Gastrocnemius medialis (tissue), 4 donors: ENCODE measurements at regions of chr5 and their contacts with region 1.

Region 1: DNA sequence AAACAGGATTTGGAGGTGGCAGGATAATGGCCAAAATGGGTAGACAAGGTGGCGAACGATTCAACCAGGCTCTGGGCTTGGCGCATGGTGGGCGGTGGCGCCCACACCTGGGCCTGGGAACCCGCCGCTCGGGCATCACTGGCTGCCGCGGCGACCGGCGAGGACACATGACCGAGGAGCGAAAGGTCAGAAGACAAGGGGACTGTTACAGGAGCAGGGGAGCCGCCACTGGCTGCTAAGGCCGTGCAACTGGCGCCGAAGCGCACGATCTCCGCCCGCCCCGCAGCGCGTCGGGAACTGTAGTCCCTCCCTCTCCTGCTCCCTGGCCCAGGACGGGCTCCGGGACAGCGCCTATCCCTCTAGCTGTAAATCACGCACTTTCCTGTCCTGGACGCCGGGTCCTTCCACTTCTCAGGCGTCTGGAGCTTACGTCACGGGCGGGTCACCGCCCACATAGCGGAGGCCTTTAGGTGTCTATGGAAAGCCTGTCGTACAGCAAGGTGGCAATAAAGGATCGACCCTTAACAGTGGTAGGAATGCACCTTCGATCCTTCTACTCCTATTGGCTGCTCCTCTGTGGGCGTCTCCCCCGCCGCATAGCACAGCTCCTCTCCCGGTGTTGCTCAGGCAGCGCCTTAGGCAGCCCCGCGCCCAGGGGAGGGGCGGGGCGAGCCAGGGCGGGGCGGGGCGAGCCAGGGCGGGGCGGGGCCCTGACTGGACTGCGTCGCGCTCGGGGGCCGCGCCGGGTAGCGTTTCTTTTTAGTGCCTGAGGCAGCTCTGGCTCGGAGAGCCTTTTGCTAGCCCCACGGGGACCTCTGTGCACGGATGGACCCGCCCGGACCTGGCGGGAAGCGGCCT is at the start of gene ICE1:
- DNase-seq: peak; percentile 97 to 99
- ATAC-seq: peak; percentile 96 to 97
- H3K4me3 ChIP-seq: peak within 1 kb of the TSS; percentile 66 to 99 (median 84)
- H3K27ac ChIP-seq: peak within 1 kb of the TSS; percentile 89 to 99 (median 94)
- H3K4me1 ChIP-seq: peaks cover 34 to 44% of the 10 kb centered on the region in 2 donors
- H3K27me3 ChIP-seq: no peaks in the 10 kb centered on the region
- CTCF ChIP-seq: peak in 1 of 5 experiments; percentile 8
- POLR2A ChIP-seq: peak; percentile 39 to 66
- total RNA-seq, gene ICE1: 24.9 to 34.7 (median 32.7) TPM

Region 2: DNA sequence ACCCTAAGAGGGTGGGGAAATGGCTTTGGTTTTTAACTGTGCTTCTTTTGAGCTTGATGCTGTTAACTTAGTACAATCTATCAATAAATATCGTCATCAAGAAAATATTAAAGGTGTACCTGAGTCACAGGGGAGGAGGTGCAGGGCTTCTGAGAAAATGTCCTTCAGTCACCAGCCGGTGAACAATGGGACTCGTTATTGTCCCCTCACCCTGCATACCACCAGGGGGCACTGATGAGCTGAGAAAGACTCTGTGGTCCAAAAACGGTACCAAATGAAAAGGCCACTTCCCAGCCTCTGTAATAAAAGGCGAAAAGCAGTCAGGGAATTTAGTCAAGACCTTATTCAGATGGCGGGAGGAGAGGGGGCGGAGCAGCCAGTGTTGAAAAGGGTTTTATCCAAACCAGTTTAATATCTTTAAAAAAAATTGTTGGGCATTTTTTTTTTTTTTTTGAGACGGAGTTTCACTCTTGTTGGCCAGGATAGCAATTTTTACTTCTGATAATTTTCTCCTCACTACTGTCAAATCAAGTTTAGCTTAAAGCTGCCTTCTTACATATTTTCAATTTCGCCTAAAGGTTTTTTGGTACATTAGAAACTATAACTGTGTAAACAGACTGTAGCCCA is 554.0 kb before region 1 on chr5:
- in situ Hi-C with region 1: loop called in 1 of 4 experiments (anchors 25 kb)
- intact Hi-C with region 1: loop called (anchors 2 kb)
- DNase-seq: no peak
- ATAC-seq: peak in 1 of 2 donors; percentile 49
- H3K4me3 ChIP-seq: no peak overlapping the region
- H3K27ac ChIP-seq: no peak overlapping the region
- H3K4me1 ChIP-seq: no peaks in the 10 kb centered on the region
- H3K27me3 ChIP-seq: no peaks in the 10 kb centered on the region
- CTCF ChIP-seq: peak in 4 of 5 experiments; percentile 30 to 73 (median 48)
- POLR2A ChIP-seq: no peak

Region 3: GRCh38 chr5:5141625-5142532 is 280.3 kb before region 1 on chr5:
- in situ Hi-C with region 1: no loop called
- intact Hi-C with region 1: loop called (anchors 1 kb)
- DNase-seq: peak in 1 of 2 donors; percentile 22
- ATAC-seq: peak; percentile 68 to 81
- H3K4me3 ChIP-seq: peak overlapping the region; percentile 42 to 48 (median 44)
- H3K27ac ChIP-seq: no peak overlapping the region
- H3K4me1 ChIP-seq: peaks cover 7 to 22% of the 10 kb centered on the region in 2 donors
- H3K27me3 ChIP-seq: peaks cover 20 to 25% (median 24%) of the 10 kb centered on the region in 3 donors
- CTCF ChIP-seq: peak; percentile 72 to 82 (median 75)
- POLR2A ChIP-seq: no peak

Region 4: GRCh38 chr5:5326115-5326758 is 96.0 kb before region 1 on chr5:
- in situ Hi-C with region 1: no loop called
- intact Hi-C with region 1: no loop called
- DNase-seq: no peak
- ATAC-seq: no peak
- H3K4me3 ChIP-seq: no peak overlapping the region
- H3K27ac ChIP-seq: no peak overlapping the region
- H3K4me1 ChIP-seq: no peaks in the 10 kb centered on the region
- H3K27me3 ChIP-seq: no peaks in the 10 kb centered on the region
- CTCF ChIP-seq: no peak
- POLR2A ChIP-seq: no peak

Region 5: GRCh38 chr5:5398046-5398445 is 24.1 kb before region 1 on chr5:
- in situ Hi-C with region 1: no loop called
- intact Hi-C with region 1: loop called (anchors 2 kb)
- DNase-seq: no peak
- ATAC-seq: no peak
- H3K4me3 ChIP-seq: no peak overlapping the region
- H3K27ac ChIP-seq: no peak overlapping the region
- H3K4me1 ChIP-seq: no peaks in the 10 kb centered on the region
- H3K27me3 ChIP-seq: no peaks in the 10 kb centered on the region
- CTCF ChIP-seq: no peak
- POLR2A ChIP-seq: no peak

Region 6: DNA sequence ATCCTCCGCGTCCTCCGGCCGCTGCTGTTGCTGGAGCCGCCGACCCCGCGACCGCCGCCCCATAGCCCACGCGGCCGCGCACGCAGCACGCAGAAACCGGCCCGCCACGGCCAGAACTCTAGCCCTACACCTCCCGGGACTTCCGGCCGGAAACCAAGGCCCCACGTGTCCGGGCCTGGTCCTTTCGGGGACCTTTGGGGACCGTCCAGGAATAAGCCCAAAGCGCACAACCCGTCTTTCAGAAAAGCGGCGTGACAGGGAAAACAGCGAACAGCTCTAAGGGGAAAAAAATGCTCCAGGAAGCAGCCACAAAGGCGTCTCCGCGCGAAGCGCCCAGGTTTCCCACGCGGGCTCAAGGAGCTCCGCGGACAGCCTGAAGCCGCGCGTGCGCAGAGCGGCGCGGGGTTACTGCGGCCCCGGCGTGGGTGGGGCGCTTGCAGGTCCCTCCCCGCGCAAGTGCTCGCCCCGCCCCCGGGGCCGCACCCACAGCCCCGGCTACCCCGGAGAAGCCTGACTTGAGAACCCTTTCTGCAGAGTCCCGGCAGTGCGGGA is 1210.8 kb after region 1 on chr5 and contains the starts of genes NSUN2 and SRD5A1:
- in situ Hi-C with region 1: no loop called
- intact Hi-C with region 1: loop called (anchors 1 kb)
- DNase-seq: peak; percentile 78 to 84
- ATAC-seq: peak; percentile 95 to 96
- H3K4me3 ChIP-seq: peak within 1 kb of the TSS; percentile 76 to 87 (median 85)
- H3K27ac ChIP-seq: peak within 1 kb of the TSS; percentile 84 to 95 (median 90)
- H3K4me1 ChIP-seq: peaks cover 20 to 26% of the 10 kb centered on the region in 2 donors
- H3K27me3 ChIP-seq: no peaks in the 10 kb centered on the region
- CTCF ChIP-seq: no peak
- POLR2A ChIP-seq: peak; percentile 69 to 74
- total RNA-seq, gene NSUN2: 29.4 to 45.9 (median 38.0) TPM
- total RNA-seq, gene SRD5A1: 0.75 to 4.3 (median 3.3) TPM